B cell (primary cell): ENCODE measurements at regions of chr12 and their contacts with region 1.

Region 1: GRCh38 chr12:89695830-89696229 is 12.8 kb downstream of the ATP2B1 start:
- DNase-seq: no peak
- ATAC-seq: no peak
- H3K4me3 ChIP-seq: no peak overlapping the region
- H3K4me3 Mint-ChIP-seq: peak overlapping the region; percentile 11
- H3K27ac ChIP-seq: peak overlapping the region in 1 of 2 donors; percentile 27
- H3K27ac Mint-ChIP-seq: no peak overlapping the region
- H3K4me1 ChIP-seq: peaks cover 37 to 73% of the 10 kb centered on the region in 2 donors
- H3K4me1 Mint-ChIP-seq: peaks cover 85% of the 10 kb centered on the region
- H3K27me3 ChIP-seq: no peaks in the 10 kb centered on the region
- H3K27me3 Mint-ChIP-seq: no peaks in the 10 kb centered on the region
- CTCF ChIP-seq: no peak

Region 2: DNA sequence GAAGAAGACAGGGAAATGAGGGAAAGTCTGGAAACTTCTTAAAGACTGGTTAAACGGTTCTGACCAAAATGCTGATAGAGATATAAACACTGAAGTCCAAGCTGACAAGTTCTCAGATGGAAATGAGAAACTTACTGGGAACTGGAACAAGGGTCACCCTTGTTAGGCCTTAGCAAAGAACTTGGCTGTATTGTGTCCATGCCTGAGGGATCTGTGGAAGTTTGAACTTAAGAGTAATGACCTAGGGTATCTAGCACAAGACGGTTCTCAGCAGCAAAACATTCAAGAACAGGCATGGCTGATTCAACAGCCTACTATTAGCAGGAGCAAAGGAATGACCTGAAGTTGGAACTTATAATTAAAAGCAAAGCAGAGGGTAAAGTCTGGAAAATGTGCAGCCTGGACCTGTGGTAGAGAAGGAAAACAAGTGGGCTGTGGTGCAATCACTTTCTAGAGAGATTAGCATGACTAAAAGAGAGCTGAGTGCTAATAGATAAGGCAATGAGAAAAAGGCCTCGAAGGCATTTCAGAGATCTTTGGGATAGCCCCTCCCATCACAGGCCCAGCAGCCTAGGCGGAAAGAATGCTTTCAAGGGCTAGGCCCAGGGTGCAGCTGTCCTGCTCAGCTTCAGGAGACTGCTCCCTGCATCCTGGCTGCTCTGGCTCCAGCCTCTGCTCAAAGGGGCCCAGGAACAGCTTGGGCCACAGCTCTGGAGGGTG is 47.5 kb before region 1 on chr12:
- CTCF ChIA-PET with region 1: no interaction called
- POLR2A ChIA-PET with region 1: no interaction called
- intact Hi-C with region 1: loop called (anchors 1 kb)
- DNase-seq: no peak
- ATAC-seq: no peak
- H3K4me3 ChIP-seq: no peak overlapping the region
- H3K4me3 Mint-ChIP-seq: no peak overlapping the region
- H3K27ac ChIP-seq: no peak overlapping the region
- H3K27ac Mint-ChIP-seq: no peak overlapping the region
- H3K4me1 ChIP-seq: peaks cover 4 to 17% of the 10 kb centered on the region in 2 donors
- H3K4me1 Mint-ChIP-seq: peaks cover 62% of the 10 kb centered on the region
- H3K27me3 ChIP-seq: no peaks in the 10 kb centered on the region
- H3K27me3 Mint-ChIP-seq: no peaks in the 10 kb centered on the region
- CTCF ChIP-seq: no peak

Region 3: GRCh38 chr12:89671469-89671868 is 24.4 kb before region 1 on chr12:
- CTCF ChIA-PET with region 1: no interaction called
- POLR2A ChIA-PET with region 1: interaction called, 3 read pairs
- intact Hi-C with region 1: loop called (anchors 2 kb)
- DNase-seq: no peak
- ATAC-seq: no peak
- H3K4me3 ChIP-seq: no peak overlapping the region
- H3K4me3 Mint-ChIP-seq: peak overlapping the region; percentile 18
- H3K27ac ChIP-seq: peak overlapping the region in 1 of 2 donors; percentile 50
- H3K27ac Mint-ChIP-seq: peak overlapping the region; percentile 47
- H3K4me1 ChIP-seq: peaks cover 38 to 80% of the 10 kb centered on the region in 2 donors
- H3K4me1 Mint-ChIP-seq: peaks cover 87% of the 10 kb centered on the region
- H3K27me3 ChIP-seq: no peaks in the 10 kb centered on the region
- H3K27me3 Mint-ChIP-seq: no peaks in the 10 kb centered on the region
- CTCF ChIP-seq: no peak

Region 4: DNA sequence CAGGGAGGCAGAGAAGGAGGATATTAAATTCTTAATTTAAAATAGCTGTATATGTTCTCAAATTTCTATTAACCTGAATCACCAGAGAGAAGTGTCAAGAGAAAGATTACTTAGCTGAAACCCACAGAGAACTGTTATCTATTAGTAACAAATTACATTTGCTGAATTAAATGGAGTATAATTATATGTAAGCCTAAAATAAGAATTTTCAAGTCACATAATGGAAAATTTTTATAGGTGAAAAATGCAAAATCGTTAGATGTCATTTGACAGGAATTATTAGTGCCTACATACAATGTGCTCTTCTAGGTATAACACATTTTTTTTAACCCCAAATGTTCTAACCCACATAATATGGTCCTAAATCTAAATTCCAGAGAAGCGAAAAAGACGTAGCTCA is 16.9 kb after region 1 on chr12:
- CTCF ChIA-PET with region 1: no interaction called
- POLR2A ChIA-PET with region 1: no interaction called
- intact Hi-C with region 1: no loop called
- DNase-seq: no peak
- ATAC-seq: no peak
- H3K4me3 ChIP-seq: no peak overlapping the region
- H3K4me3 Mint-ChIP-seq: no peak overlapping the region
- H3K27ac ChIP-seq: no peak overlapping the region
- H3K27ac Mint-ChIP-seq: no peak overlapping the region
- H3K4me1 ChIP-seq: peaks cover 3 to 5% of the 10 kb centered on the region in 2 donors
- H3K4me1 Mint-ChIP-seq: peaks cover 7% of the 10 kb centered on the region
- H3K27me3 ChIP-seq: no peaks in the 10 kb centered on the region
- H3K27me3 Mint-ChIP-seq: no peaks in the 10 kb centered on the region
- CTCF ChIP-seq: no peak